Activated CD8-positive, alpha-beta T cell treated with anti-CD3 and anti-CD28 coated beads, Interleukin-2, amount 10 ng/mL, durations not matched to agents 7 days and 5 days (primary cell): ENCODE measurements at regions of chr10 and their contacts with region 1.

Region 1: GRCh38 chr10:62038609-62039190 is 137.2 kb downstream of the ARID5B start:
- DNase-seq: peak; percentile 88
- ATAC-seq: peak; percentile 78
- H3K4me3 Mint-ChIP-seq: peak overlapping the region; percentile 11
- H3K27ac Mint-ChIP-seq: peak overlapping the region; percentile 71
- H3K4me1 Mint-ChIP-seq: peaks cover 62% of the 10 kb centered on the region
- H3K27me3 Mint-ChIP-seq: no peaks in the 10 kb centered on the region

Region 2: GRCh38 chr10:61903221-61903927 is 135.3 kb before region 1 on chr10:
- CTCF ChIA-PET with region 1: interaction called, 57 read pairs
- POLR2A ChIA-PET with region 1: interaction called, 41 read pairs
- DNase-seq: peak; percentile 79
- ATAC-seq: peak; percentile 67
- H3K4me3 Mint-ChIP-seq: peak overlapping the region; percentile 94
- H3K27ac Mint-ChIP-seq: peak overlapping the region; percentile 97
- H3K4me1 Mint-ChIP-seq: peaks cover 36% of the 10 kb centered on the region
- H3K27me3 Mint-ChIP-seq: no peaks in the 10 kb centered on the region

Region 3: GRCh38 chr10:62000037-62000603 is 38.6 kb before region 1 on chr10:
- CTCF ChIA-PET with region 1: no interaction called
- POLR2A ChIA-PET with region 1: no interaction called
- DNase-seq: peak; percentile 5
- ATAC-seq: no peak
- H3K4me3 Mint-ChIP-seq: no peak overlapping the region
- H3K27ac Mint-ChIP-seq: no peak overlapping the region
- H3K4me1 Mint-ChIP-seq: peaks cover 6% of the 10 kb centered on the region
- H3K27me3 Mint-ChIP-seq: no peaks in the 10 kb centered on the region

Region 4: DNA sequence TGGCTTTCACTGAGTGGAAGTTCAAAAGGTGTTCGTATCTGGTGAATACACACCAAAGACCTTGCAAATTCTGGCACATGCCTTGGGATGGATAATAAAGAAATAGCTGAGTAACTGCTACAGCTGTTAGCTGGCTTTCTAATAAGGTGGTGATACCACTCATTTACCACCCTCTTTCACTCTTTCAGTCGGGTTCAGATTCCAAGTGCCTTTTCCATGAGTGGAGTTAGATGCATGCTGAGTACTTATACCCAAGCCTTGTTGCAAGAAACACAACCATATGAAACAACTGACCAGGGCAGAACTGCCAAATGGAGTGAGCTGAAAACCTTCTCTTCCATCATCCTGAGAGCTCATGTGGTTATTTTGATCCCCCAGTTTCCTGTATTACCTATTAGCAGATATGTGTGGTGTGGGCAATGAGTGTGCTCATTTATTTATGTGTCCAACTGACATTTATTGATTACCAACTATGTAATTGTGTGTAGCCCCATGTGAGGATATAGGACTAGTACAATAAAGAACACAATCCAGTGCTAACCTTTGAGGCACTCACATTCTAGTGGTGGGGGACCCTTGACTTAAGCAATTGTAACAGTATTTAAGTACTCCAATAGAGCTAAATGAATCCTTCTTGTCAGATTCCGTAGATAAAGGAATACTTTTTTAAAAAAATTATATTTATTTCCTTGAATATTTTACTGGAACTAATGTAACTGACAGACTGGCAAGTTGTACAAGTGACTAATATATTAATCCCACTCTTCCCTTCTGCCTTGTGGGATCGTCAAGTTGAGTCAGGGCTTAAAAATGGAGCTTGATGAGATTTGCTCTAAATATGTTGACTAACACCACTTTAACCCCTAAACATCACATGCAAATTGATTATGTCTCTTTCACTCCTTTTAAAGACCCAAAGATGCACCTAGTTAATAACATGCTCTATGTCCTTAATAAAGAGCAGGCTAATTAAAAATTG is 12.5 kb before region 1 on chr10:
- CTCF ChIA-PET with region 1: interaction called, 28 read pairs
- POLR2A ChIA-PET with region 1: no interaction called
- DNase-seq: no peak
- ATAC-seq: no peak
- H3K4me3 Mint-ChIP-seq: no peak overlapping the region
- H3K27ac Mint-ChIP-seq: peak overlapping the region; percentile 17
- H3K4me1 Mint-ChIP-seq: peaks cover 15% of the 10 kb centered on the region
- H3K27me3 Mint-ChIP-seq: no peaks in the 10 kb centered on the region

Region 5: GRCh38 chr10:62082729-62083411 is 44.2 kb after region 1 on chr10:
- CTCF ChIA-PET with region 1: interaction called, 33 read pairs
- POLR2A ChIA-PET with region 1: interaction called, 6 read pairs
- DNase-seq: peak; percentile 74
- ATAC-seq: peak; percentile 78
- H3K4me3 Mint-ChIP-seq: peak overlapping the region; percentile 66
- H3K27ac Mint-ChIP-seq: peak overlapping the region; percentile 92
- H3K4me1 Mint-ChIP-seq: peaks cover 68% of the 10 kb centered on the region
- H3K27me3 Mint-ChIP-seq: no peaks in the 10 kb centered on the region

Region 6: DNA sequence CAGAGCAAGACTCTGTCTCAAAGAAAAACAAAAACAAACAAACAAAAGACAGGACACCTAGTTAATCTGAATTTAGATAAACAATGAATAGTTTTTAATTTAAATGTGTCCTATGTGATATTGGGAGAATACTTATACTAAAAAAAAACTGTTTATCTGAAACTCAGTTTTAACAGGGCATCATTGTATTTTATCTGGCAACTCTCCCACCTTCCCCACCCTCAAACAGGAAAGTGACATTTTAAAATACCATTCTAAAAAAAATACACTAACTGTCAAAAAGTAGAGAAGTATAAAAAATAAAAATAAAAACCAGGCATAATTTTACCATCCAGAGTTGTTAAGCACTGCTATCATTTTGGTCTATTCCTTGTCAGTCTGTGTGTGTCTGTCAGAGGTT is 110.9 kb after region 1 on chr10:
- CTCF ChIA-PET with region 1: no interaction called
- POLR2A ChIA-PET with region 1: no interaction called
- DNase-seq: no peak
- ATAC-seq: no peak
- H3K4me3 Mint-ChIP-seq: no peak overlapping the region
- H3K27ac Mint-ChIP-seq: no peak overlapping the region
- H3K4me1 Mint-ChIP-seq: peaks cover 15% of the 10 kb centered on the region
- H3K27me3 Mint-ChIP-seq: no peaks in the 10 kb centered on the region

Region 7: DNA sequence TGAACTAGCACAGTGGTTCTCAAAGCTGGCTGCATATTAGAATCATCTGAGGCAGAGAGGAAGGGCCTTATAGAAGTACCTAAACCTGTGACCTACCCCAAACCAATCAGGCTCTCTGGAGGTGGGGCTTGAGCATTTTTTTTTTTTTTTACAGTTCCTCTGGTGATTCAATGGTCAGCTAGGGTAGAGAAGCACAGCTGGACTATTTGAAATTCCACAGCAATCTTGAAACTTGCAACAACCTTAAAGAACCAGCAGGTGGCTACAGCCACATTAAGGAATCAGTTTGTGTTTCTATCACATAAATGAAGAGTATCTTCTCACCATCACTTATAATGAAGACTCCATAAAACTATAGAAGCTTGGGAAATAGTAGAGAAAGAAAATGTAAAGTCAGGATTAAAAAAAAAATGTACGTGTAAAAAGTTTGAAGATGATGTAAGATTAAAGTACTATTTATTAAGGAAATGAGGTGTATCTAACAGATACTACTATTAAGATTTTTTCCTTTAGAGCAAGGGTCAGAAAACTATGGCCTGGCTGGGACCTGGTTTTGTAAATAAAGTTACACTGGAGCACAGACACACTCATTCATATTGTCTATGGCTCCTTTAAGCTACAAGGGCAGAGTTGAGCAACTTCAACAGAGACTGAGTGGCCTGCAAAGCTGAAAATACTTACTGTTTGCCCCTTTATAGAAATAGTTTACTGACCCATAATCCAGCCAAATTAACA is 226.2 kb after region 1 on chr10:
- CTCF ChIA-PET with region 1: interaction called, 30 read pairs
- POLR2A ChIA-PET with region 1: no interaction called
- DNase-seq: no peak
- ATAC-seq: no peak
- H3K4me3 Mint-ChIP-seq: no peak overlapping the region
- H3K27ac Mint-ChIP-seq: no peak overlapping the region
- H3K4me1 Mint-ChIP-seq: peaks cover 17% of the 10 kb centered on the region
- H3K27me3 Mint-ChIP-seq: peaks cover 26% of the 10 kb centered on the region